Gastrocnemius medialis (tissue), 4 donors: ENCODE measurements at regions of chr14 and their contacts with region 1.

Region 1: GRCh38 chr14:54440873-54441868 is at the start of gene CNIH1:
- DNase-seq: peak; percentile 79 to 85
- ATAC-seq: peak; percentile 98 to 99
- H3K4me3 ChIP-seq: peak within 1 kb of the TSS; percentile 64 to 70 (median 66)
- H3K27ac ChIP-seq: peak within 1 kb of the TSS; percentile 73 to 88 (median 80)
- H3K4me1 ChIP-seq: peaks cover 13 to 24% of the 10 kb centered on the region in 2 donors
- H3K27me3 ChIP-seq: no peaks in the 10 kb centered on the region
- CTCF ChIP-seq: peak; percentile 83 to 98 (median 91)
- POLR2A ChIP-seq: peak in 1 of 2 donors; percentile 40
- total RNA-seq, gene CNIH1: 73.4 to 176 (median 136) TPM

Region 2: DNA sequence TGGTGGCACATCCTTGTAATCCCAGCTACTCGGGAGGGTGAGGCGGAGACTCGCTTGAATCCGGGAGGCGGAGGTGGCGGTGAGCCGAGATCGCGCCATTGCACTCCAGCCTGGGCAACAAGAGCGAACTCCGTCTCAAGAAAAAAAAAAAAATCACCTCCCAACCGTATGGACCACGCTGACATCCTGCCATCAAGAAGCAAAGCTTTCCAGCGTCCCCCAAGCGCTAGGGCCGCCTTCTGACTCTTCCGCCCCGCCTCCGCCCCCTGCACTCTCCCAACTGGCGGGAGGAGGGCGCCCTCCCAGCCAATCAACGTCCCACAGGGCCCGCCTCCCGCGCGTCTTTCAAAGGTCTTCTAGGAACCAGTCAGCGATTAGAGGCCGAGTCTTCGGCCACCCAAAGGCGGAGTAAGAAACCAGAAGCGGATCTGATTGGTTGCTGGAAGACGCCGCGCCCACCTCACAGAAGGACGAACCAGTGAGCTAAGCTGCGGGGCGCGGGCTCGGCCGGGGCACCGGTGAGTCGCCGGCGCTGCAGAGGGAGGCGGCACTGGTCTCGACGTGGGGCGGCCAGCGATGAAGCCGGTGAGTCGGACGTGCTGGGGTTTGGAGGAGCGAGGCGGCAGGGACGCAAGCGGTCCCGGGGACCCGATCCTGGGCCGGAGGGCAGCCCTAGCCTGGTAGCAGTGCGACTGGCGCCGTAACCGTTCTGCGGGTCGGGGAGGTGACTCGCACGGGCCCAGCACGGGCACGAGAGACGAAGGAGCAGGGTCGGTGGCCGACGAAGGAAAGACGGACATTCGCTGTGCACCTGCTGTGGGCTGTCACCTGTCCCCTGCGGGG is 44.5 kb before region 1 on chr14 and contains the start of gene CDKN3:
- in situ Hi-C with region 1: no loop called
- intact Hi-C with region 1: loop called (anchors 1 kb)
- DNase-seq: peak; percentile 98
- ATAC-seq: peak; percentile 100
- H3K4me3 ChIP-seq: peak within 1 kb of the TSS; percentile 73 to 83 (median 78)
- H3K27ac ChIP-seq: peak within 1 kb of the TSS; percentile 25 to 51 (median 50)
- H3K4me1 ChIP-seq: peaks cover 3 to 12% of the 10 kb centered on the region in 2 donors
- H3K27me3 ChIP-seq: no peaks in the 10 kb centered on the region
- CTCF ChIP-seq: peak in 4 of 5 experiments; percentile 34 to 67 (median 58)
- POLR2A ChIP-seq: peak; percentile 58 to 81
- total RNA-seq, gene CDKN3: 1.2 to 5.1 (median 1.6) TPM

Region 3: GRCh38 chr14:54488646-54489317 is 47.6 kb after region 1 on chr14 and contains the start of gene GMFB:
- in situ Hi-C with region 1: no loop called
- intact Hi-C with region 1: loop called (anchors 2 kb)
- DNase-seq: peak; percentile 84 to 90
- ATAC-seq: peak; percentile 97
- H3K4me3 ChIP-seq: peak within 1 kb of the TSS; percentile 71 to 97 (median 94)
- H3K27ac ChIP-seq: peak within 1 kb of the TSS; percentile 90 to 98 (median 92)
- H3K4me1 ChIP-seq: peaks cover 20 to 31% of the 10 kb centered on the region in 2 donors
- H3K27me3 ChIP-seq: no peaks in the 10 kb centered on the region
- CTCF ChIP-seq: peak in 3 of 5 experiments; percentile 44 to 61 (median 55)
- POLR2A ChIP-seq: peak; percentile 66 to 70
- total RNA-seq, gene GMFB: 5.0 to 21.7 (median 7.3) TPM

Region 4: DNA sequence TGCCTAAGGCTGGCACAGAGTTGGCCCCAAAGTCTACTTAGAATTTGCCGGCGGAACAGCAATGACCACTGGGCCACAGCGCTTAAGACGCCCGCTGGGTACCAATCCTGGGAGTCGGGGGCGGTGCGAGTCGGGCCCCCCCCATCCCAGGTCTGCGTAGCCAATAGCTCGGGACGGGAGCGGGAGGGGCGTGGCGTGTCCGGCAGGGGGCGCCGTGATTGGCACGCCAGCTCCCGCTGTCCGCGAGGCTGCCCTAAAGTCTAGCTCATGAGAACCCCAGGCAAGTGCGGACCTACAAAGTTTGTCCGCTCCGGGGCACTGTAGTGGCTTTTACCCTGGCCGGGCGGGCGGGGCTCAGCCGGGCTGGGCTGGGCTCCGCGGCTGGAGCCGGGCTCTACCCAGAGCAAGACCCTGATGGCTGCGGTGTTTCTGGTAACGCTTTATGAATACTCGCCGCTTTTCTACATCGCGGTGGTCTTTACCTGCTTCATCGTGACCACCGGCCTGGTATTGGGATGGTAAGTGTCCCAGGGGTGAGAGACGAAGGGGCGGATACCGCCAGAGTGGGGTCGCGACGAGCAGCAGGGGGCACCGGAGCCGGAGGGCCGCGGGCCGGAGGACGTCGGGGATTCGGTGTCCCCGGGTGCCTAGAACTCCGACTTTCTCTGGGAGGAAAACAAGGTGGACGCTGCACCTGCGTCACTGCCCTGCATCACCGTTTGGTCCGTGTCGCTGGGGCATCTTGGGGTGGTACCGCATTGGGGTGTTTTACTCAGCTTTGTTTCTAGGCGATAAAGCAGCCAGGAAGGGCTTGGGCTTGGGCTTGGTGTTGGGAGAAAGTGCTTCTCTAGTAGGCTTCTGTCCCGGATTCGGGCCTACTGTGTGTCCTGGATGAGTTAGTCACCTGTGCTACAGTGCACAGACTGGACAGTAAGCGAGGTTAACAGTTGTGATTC is 68.7 kb after region 1 on chr14 and contains the start of gene CGRRF1:
- in situ Hi-C with region 1: no loop called
- intact Hi-C with region 1: loop called (anchors 1 kb)
- DNase-seq: peak; percentile 97 to 98
- ATAC-seq: peak; percentile 97 to 100
- H3K4me3 ChIP-seq: peak within 1 kb of the TSS; percentile 96 to 100 (median 99)
- H3K27ac ChIP-seq: peak within 1 kb of the TSS; percentile 91 to 93 (median 92)
- H3K4me1 ChIP-seq: peaks cover 30 to 33% of the 10 kb centered on the region in 2 donors
- H3K27me3 ChIP-seq: no peaks in the 10 kb centered on the region
- CTCF ChIP-seq: peak; percentile 24 to 90 (median 88)
- POLR2A ChIP-seq: peak; percentile 66 to 74
- total RNA-seq, gene CGRRF1: 13.7 to 27.0 (median 20.7) TPM